ENCODE measurements at regions of chr10 and their contacts with region 1.

Region 1: DNA sequence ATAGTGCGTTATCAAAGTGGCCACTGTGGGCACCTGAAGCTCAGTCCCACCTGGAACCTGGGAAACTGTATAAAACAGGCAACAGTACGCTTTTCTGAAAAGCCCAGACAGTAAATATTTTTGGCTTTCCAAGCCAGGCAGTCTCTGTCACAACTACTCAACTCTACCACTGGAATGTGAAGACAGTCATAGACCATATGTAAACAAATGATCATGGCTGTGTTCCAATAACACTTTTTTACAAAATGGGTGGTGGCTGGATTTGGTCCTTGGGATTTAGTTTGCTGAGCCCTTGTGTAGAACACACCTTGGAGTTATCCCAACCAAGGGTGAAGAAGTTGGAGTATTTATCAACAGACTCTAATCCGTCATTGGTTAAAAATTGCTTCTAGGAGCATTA is 259.9 kb downstream of the SKIDA1 start:
- DNase-seq: no peak
- H3K4me3 ChIP-seq: no peak overlapping the region
- H3K27ac ChIP-seq: no peak overlapping the region
- H3K4me1 ChIP-seq: no peaks in the 10 kb centered on the region
- H3K27me3 ChIP-seq: no peaks in the 10 kb centered on the region
- CTCF ChIP-seq: no peak
- POLR2A ChIP-seq: no peak

Region 2: DNA sequence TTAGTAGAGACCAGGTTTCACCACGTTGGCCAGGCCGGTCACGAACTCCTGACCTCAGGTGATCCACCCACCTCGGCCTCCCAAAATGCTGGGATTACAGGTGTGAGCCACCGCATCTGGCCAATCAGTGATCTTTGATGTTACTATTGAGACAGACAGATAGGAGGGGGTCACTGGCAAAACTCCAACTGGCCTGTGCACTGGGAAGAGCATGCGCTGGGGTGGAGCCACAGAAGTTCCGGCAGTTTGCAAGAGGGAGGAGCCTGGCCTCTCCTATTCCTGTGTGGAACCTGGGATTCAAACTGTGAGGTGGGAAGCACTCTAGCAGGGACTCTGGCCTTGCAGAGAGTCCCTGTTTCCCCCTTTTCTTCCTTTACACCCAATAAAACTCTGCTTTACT is 429.2 kb before region 1 on chr10:
- intact Hi-C with region 1: no loop called
- DNase-seq: no peak
- H3K4me3 ChIP-seq: no peak overlapping the region
- H3K27ac ChIP-seq: no peak overlapping the region
- H3K4me1 ChIP-seq: no peaks in the 10 kb centered on the region
- H3K27me3 ChIP-seq: no peaks in the 10 kb centered on the region
- CTCF ChIP-seq: no peak
- POLR2A ChIP-seq: no peak

Region 3: DNA sequence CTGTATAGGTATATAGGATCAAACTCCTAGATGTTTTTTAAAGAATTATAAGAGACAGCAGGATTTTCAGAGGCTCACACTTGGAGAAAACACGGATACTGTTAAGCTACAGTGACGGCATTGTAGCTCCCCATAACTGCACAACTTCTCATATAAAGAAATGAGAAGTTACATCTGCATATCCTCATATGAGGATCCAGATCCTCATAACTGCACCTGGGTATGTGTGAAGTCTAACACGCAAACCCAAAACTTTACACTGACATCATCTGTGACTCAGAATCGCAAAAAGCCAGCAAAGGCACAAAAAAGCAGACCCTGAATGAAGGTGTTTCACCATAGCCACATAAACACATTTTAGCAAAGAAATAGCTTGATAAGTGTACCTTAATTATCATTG is 402.6 kb before region 1 on chr10:
- intact Hi-C with region 1: loop called in 1 of 2 experiments (anchors 10 kb)
- DNase-seq: no peak
- H3K4me3 ChIP-seq: no peak overlapping the region
- H3K27ac ChIP-seq: no peak overlapping the region
- H3K4me1 ChIP-seq: no peaks in the 10 kb centered on the region
- H3K27me3 ChIP-seq: no peaks in the 10 kb centered on the region
- CTCF ChIP-seq: no peak
- POLR2A ChIP-seq: no peak

Region 4: DNA sequence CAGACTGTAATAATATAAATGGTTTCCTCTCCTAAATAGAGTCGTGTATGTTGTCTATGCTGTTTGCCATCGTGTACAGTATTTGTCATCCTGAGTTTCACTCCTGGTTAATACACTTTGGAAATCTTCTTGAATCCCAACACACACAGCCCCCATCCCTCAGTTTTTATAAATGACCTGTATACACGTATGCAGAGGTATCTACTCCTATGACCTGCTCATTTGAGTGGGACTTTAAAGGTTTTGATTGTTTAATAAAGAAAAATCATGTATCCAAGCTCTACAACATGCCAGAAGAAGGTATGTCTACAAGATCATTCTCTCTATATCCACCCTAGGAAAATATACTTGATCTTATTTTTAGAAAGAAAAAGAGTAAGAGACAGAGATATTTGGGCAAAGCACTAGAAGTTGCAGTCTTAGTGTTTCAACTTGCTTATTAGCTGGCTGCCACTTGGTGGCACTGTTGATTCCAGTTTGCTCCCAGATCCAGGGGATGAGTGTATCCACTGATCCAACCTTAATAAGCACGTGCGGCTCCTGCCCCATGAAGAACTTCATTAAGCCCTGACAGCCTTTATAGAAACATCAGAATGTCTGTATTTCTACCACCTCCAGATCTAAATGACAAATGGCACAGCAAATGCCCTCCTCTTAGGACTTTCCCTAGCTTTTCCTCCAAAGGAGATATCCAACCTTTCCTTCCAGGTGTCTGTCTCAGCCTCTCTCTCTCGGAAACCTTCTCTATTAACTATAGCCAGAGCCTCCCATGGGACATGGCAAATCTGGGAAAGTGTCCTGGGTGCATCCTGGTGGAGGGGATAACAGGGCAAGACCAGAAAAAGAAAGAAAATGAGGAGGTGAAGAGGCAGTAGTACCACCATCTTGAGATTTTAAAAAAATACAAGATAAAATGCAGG is 187.0 kb before region 1 on chr10:
- intact Hi-C with region 1: loop called (anchors 2 to 10 kb)
- DNase-seq: peak; percentile 54 to 85 (median 65)
- H3K4me3 ChIP-seq: no peak overlapping the region
- H3K27ac ChIP-seq: no peak overlapping the region
- H3K4me1 ChIP-seq: no peaks in the 10 kb centered on the region
- H3K27me3 ChIP-seq: no peaks in the 10 kb centered on the region
- CTCF ChIP-seq: peak; percentile 55 to 80 (median 72)
- POLR2A ChIP-seq: no peak

Region 5: DNA sequence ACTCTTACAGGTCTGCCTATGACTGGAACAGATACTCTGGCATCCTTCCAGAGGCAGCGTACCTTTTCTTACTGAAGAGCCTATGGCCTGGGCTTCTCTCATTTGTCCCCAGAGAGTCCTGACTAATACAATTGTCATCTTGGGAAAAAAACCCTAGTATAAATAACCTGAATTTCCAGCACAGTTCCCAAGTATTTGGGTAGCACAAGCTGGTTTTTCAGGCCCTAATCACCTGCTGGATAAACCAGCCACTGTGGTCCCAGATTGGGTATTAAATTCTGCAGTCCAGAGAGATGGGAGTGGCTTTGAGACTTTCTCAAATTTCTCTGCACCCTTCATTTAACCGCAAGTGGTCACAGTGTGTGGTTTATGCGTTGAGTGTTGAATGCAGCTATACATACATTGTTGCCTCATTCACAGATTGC is 181.7 kb before region 1 on chr10:
- intact Hi-C with region 1: loop called (anchors 2 to 10 kb)
- DNase-seq: no peak
- H3K4me3 ChIP-seq: no peak overlapping the region
- H3K27ac ChIP-seq: no peak overlapping the region
- H3K4me1 ChIP-seq: no peaks in the 10 kb centered on the region
- H3K27me3 ChIP-seq: no peaks in the 10 kb centered on the region
- CTCF ChIP-seq: no peak
- POLR2A ChIP-seq: no peak